CD4-positive, alpha-beta memory T cell (primary cell): ENCODE measurements at regions of chr7 and their contacts with region 1.

Region 1: GRCh38 chr7:125695626-125696025 is 766.0 kb upstream of the POT1 start:
- DNase-seq: no peak
- H3K4me3 ChIP-seq: no peak overlapping the region
- H3K4me3 Mint-ChIP-seq: no peak overlapping the region
- H3K27ac ChIP-seq: no peak overlapping the region
- H3K27ac Mint-ChIP-seq: no peak overlapping the region
- H3K4me1 ChIP-seq: no peaks in the 10 kb centered on the region
- H3K4me1 Mint-ChIP-seq: no peaks in the 10 kb centered on the region
- H3K27me3 ChIP-seq: no peaks in the 10 kb centered on the region
- H3K27me3 Mint-ChIP-seq: no peaks in the 10 kb centered on the region

Region 2: DNA sequence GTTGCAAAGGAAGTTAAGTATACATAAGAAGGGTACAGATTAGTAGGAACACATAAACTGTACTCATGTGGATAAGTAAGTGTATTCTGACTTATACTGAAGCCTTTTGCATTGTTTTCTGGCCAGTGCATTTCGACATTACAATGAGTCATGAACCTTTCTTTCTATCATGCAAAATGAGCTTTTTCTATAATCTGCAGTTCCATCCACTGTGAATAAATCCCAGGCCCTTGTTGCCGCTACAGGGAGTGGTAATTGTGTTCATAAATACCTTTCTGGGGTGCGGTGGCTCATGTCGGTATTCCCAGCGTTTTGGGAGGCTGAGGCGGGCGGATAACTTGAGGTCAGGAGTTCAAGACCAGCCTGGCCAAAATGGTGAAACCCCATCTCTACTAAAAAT is 698.8 kb after region 1 on chr7:
- CTCF ChIA-PET with region 1: no interaction called
- POLR2A ChIA-PET with region 1: no interaction called
- intact Hi-C with region 1: loop called (anchors 5 kb)
- DNase-seq: peak in 1 of 5 donors; percentile 3
- H3K4me3 ChIP-seq: no peak overlapping the region
- H3K4me3 Mint-ChIP-seq: no peak overlapping the region
- H3K27ac ChIP-seq: no peak overlapping the region
- H3K27ac Mint-ChIP-seq: no peak overlapping the region
- H3K4me1 ChIP-seq: no peaks in the 10 kb centered on the region
- H3K4me1 Mint-ChIP-seq: peaks cover 0 to 3% (median 0%) of the 10 kb centered on the region in 4 donors
- H3K27me3 ChIP-seq: no peaks in the 10 kb centered on the region
- H3K27me3 Mint-ChIP-seq: no peaks in the 10 kb centered on the region